Activated B cell treated with CpG ODN at 0.5 μM for 24 hours (primary cell): ENCODE measurements at regions of chr17 and their contacts with region 1.

Region 1: DNA sequence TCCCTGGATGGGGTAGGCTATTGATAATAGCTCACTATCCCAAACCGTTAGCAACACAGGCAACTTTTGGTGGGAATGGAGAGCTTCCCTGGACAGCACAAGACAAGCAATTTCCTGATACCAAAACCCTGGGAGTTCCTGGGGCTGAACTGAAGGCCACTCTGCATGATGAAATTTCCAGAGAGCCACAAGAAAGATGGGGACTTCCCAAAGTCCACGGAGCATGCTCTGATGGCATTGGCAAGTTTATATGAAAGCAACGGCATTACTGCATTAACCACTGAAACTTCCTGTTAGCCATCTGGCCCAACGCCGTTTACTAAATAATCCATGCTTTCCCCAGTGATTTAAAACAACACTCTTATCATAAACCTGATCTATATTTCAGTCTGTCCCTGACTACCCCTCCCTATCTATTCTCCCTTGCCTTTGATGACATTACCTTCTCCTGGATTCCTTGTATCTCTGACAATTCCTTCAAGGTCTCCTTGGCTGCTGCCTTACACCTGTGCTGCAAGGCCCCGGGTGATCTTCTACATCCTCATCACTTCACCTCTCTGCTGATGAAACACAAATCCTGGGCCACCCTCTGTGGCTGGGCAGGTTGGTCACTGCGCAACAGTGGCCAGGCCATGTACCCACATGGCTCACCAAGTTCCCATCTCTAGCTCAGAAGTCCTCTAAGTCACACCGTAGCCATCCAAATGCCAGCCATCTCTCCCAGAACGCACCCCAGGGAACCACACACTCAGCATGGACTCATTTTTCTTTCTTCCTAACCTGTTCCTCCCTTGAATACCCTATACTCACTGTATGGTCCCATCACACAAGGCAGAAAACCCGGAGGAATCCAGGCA is 108.5 kb upstream of the RCVRN start:
- DNase-seq: no peak
- ATAC-seq: peak; percentile 62
- H3K4me3 Mint-ChIP-seq: peak overlapping the region; percentile 35
- H3K27ac Mint-ChIP-seq: peak overlapping the region; percentile 72
- H3K4me1 Mint-ChIP-seq: peaks cover 43% of the 10 kb centered on the region
- H3K27me3 Mint-ChIP-seq: no peaks in the 10 kb centered on the region
- CTCF ChIP-seq: no peak

Region 2: DNA sequence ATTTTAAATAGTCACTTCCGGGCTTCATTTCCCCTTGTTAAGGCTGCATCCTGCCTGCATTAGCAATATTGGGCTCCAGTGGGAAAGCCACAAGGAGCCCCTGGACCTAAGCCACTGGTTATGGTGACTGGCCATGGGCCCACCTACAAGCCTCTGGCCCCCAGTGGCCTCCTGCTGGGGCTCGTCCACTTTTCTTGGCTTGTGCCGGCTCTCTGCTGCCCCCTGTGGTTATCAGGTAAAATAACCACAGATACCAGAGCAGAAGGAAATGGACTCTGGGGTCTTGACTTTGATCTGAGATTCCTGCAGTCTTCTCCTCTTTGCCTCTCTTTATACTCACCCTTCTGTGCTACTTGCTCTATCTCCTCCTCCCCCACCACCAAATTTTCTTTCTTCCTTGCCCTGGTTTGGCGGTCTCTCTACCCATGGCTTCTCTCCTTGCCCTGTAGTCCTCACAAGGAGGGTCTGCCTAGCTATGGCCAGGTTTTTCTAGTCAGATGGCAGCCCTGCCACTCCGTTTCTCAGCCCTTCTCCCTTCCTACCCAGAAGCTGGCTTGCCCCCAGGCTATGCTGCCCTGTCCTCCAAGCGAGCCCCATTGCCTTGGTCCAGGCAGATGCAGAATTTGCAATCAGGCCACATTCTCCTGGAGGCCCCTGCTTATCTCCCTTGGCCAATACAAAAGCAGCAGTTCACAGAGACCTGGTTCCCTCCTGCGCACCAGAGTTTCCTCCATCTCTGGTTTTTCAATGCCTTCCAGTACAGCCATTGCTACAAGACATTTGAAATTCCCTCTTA is 25.6 kb before region 1 on chr17:
- CTCF ChIA-PET with region 1: interaction called, 4 read pairs
- POLR2A ChIA-PET with region 1: no interaction called
- intact Hi-C with region 1: loop called (anchors 2 kb)
- DNase-seq: no peak
- ATAC-seq: peak; percentile 62
- H3K4me3 Mint-ChIP-seq: no peak overlapping the region
- H3K27ac Mint-ChIP-seq: no peak overlapping the region
- H3K4me1 Mint-ChIP-seq: peaks cover 10% of the 10 kb centered on the region
- H3K27me3 Mint-ChIP-seq: no peaks in the 10 kb centered on the region
- CTCF ChIP-seq: peak; percentile 72

Region 3: GRCh38 chr17:10033959-10034358 is 20.4 kb after region 1 on chr17:
- CTCF ChIA-PET with region 1: interaction called, 4 read pairs
- POLR2A ChIA-PET with region 1: interaction called, 8 read pairs
- intact Hi-C with region 1: loop called (anchors 1 kb)
- DNase-seq: no peak
- ATAC-seq: peak; percentile 62
- H3K4me3 Mint-ChIP-seq: peak overlapping the region; percentile 62
- H3K27ac Mint-ChIP-seq: peak overlapping the region; percentile 69
- H3K4me1 Mint-ChIP-seq: peaks cover 27% of the 10 kb centered on the region
- H3K27me3 Mint-ChIP-seq: peaks cover 3% of the 10 kb centered on the region
- CTCF ChIP-seq: no peak

Region 4: GRCh38 chr17:10041916-10042588 is 28.5 kb after region 1 on chr17:
- CTCF ChIA-PET with region 1: no interaction called
- POLR2A ChIA-PET with region 1: interaction called, 7 read pairs
- intact Hi-C with region 1: loop called (anchors 1 kb)
- DNase-seq: no peak
- ATAC-seq: peak; percentile 72
- H3K4me3 Mint-ChIP-seq: peak overlapping the region; percentile 30
- H3K27ac Mint-ChIP-seq: peak overlapping the region; percentile 84
- H3K4me1 Mint-ChIP-seq: peaks cover 55% of the 10 kb centered on the region
- H3K27me3 Mint-ChIP-seq: no peaks in the 10 kb centered on the region
- CTCF ChIP-seq: no peak